ENCODE measurements at regions of chr19 and their contacts with region 1.

Region 1: GRCh38 chr19:5803752-5804515 is 933 bp upstream of the NRTN start:
- DNase-seq: peak; percentile 79
- H3K4me3 ChIP-seq: peak overlapping the region; percentile 8 to 37 (median 21)
- H3K27ac ChIP-seq: no peak overlapping the region
- H3K4me1 ChIP-seq: peaks cover 6% of the 10 kb centered on the region
- H3K27me3 ChIP-seq: peaks cover 6% of the 10 kb centered on the region
- CTCF ChIP-seq: peak; percentile 65 to 95

Region 2: GRCh38 chr19:5607318-5608270 is 196.3 kb before region 1 on chr19:
- CTCF ChIA-PET with region 1: no interaction called
- dilution Hi-C with region 1: loop called (anchors 10 kb)
- in situ Hi-C with region 1: no loop called
- intact Hi-C with region 1: no loop called
- DNase-seq: no peak
- H3K4me3 ChIP-seq: no peak overlapping the region
- H3K27ac ChIP-seq: no peak overlapping the region
- H3K4me1 ChIP-seq: no peaks in the 10 kb centered on the region
- H3K27me3 ChIP-seq: no peaks in the 10 kb centered on the region
- CTCF ChIP-seq: no peak

Region 3: GRCh38 chr19:5790573-5791520 is 13.1 kb before region 1 on chr19 and contains the start of gene DUS3L:
- CTCF ChIA-PET with region 1: no interaction called
- dilution Hi-C with region 1: no loop called
- in situ Hi-C with region 1: no loop called
- intact Hi-C with region 1: loop called (anchors 1 kb)
- DNase-seq: peak; percentile 99
- H3K4me3 ChIP-seq: peak within 1 kb of the TSS; percentile 52 to 76 (median 70)
- H3K27ac ChIP-seq: peak within 1 kb of the TSS; percentile 91
- H3K4me1 ChIP-seq: peaks cover 11% of the 10 kb centered on the region
- H3K27me3 ChIP-seq: no peaks in the 10 kb centered on the region
- CTCF ChIP-seq: no peak
- total RNA-seq, gene DUS3L: 25.5 to 47.0 TPM

Region 4: GRCh38 chr19:5904352-5905113 is 100.6 kb after region 1 on chr19 and contains the start of gene VMAC:
- CTCF ChIA-PET with region 1: no interaction called
- dilution Hi-C with region 1: loop called (anchors 5 kb)
- in situ Hi-C with region 1: loop called in 1 of 2 experiments (anchors 10 kb)
- intact Hi-C with region 1: no loop called
- DNase-seq: peak; percentile 100
- H3K4me3 ChIP-seq: peak within 1 kb of the TSS; percentile 70 to 82 (median 78)
- H3K27ac ChIP-seq: peak within 1 kb of the TSS; percentile 90
- H3K4me1 ChIP-seq: peaks cover 4% of the 10 kb centered on the region
- H3K27me3 ChIP-seq: no peaks in the 10 kb centered on the region
- CTCF ChIP-seq: no peak
- total RNA-seq, gene VMAC: 3.4 to 7.3 TPM

Region 5: DNA sequence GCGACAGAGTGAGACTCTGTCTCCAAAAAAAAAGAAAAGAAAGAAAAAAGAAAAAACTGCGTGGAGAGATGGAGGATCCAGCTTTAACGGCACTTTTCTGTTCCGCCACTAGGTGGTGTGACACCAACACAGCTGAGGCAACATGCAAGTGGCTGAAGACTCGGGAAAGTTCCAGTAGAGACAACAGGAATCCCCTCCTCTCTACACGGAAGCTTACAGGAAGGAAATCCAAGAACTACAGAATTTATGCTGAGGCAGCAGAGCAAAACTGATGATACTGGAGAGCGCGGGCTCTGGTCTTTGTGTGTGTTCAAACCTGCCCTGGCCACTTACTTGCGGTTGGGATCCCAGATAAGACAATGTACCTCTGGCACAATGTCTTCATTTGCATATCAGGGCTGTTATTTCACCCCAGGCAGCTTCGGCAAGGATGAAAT is 164.1 kb after region 1 on chr19:
- CTCF ChIA-PET with region 1: interaction called, 4 read pairs
- dilution Hi-C with region 1: loop called (anchors 10 kb)
- in situ Hi-C with region 1: no loop called
- intact Hi-C with region 1: loop called (anchors 5 kb)
- DNase-seq: peak; percentile 67
- H3K4me3 ChIP-seq: no peak overlapping the region
- H3K27ac ChIP-seq: peak overlapping the region; percentile 31
- H3K4me1 ChIP-seq: peaks cover 24% of the 10 kb centered on the region
- H3K27me3 ChIP-seq: no peaks in the 10 kb centered on the region
- CTCF ChIP-seq: peak; percentile 86 to 96

Region 6: GRCh38 chr19:6125571-6125989 is 321.6 kb after region 1 on chr19:
- CTCF ChIA-PET with region 1: interaction called, 3 read pairs
- dilution Hi-C with region 1: no loop called
- in situ Hi-C with region 1: no loop called
- intact Hi-C with region 1: loop called (anchors 10 kb)
- DNase-seq: peak; percentile 73
- H3K4me3 ChIP-seq: no peak overlapping the region
- H3K27ac ChIP-seq: no peak overlapping the region
- H3K4me1 ChIP-seq: no peaks in the 10 kb centered on the region
- H3K27me3 ChIP-seq: no peaks in the 10 kb centered on the region
- CTCF ChIP-seq: peak; percentile 96 to 97

Measured in mammary epithelial cell (primary cell).